ENCODE measurements at regions of chr1 and their contacts with region 1.

Region 1: GRCh38 chr1:87328272-87329050 is at the start of gene LMO4:
- DNase-seq: peak; percentile 93
- ATAC-seq: peak; percentile 78
- H3K4me3 ChIP-seq: peak within 1 kb of the TSS; percentile 75 to 79
- H3K27ac ChIP-seq: peak within 1 kb of the TSS; percentile 77
- H3K4me1 ChIP-seq: peaks cover 16 to 42% of the 10 kb centered on the region in 2 experiments
- H3K27me3 ChIP-seq: no peaks in the 10 kb centered on the region
- CTCF ChIP-seq: no peak
- POLR2A ChIP-seq: peak; percentile 68
- RAD21 ChIP-seq: no peak
- total RNA-seq, gene LMO4: 38.5 TPM

Region 2: DNA sequence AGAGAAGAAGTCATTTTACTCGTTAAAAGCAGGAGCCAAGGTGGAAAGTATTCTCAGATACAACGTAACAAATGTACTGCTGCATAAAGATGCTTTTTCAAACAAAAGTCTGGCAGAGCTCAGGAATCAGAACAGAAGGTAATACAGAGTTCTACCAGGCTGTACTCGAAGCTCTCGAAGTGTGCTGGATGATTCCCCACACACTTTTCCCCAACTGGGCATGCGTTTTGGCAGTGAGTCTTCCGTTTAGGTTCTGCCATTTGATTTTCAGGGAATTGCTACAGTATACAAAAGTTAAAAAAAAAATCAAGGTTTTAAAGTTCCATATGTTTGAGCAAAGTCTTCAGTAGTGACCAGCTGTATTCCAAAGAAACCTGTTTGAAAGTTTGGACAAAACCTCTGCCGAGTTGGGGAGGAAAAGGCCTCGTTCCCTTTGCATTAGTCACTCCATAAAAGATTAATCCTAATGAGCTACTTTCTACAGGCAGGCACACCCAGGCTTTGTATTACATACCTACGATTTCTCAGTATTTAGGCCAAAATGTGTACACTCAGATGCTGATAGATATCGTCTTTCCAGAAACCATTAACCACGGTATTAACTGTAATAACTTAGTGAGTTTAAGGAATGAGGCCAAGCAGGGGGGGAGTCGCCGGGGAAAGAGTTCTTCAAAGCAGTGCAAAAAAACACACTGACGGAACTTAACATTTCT is 477.4 kb after region 1 on chr1:
- CTCF ChIA-PET with region 1: no interaction called
- POLR2A ChIA-PET with region 1: no interaction called
- RAD21 ChIA-PET with region 1: no interaction called
- intact Hi-C with region 1: loop called (anchors 5 kb)
- DNase-seq: peak; percentile 28
- ATAC-seq: peak; percentile 82
- H3K4me3 ChIP-seq: peak overlapping the region in 1 of 2 experiments; percentile 52; a peak in 3 of 4 replicates
- H3K27ac ChIP-seq: peak overlapping the region; percentile 49
- H3K4me1 ChIP-seq: peaks cover 14 to 24% of the 10 kb centered on the region in 2 experiments
- H3K27me3 ChIP-seq: no peaks in the 10 kb centered on the region
- CTCF ChIP-seq: no peak
- POLR2A ChIP-seq: no peak
- RAD21 ChIP-seq: no peak; the same call in 1 of the 2 replicates

Region 3: DNA sequence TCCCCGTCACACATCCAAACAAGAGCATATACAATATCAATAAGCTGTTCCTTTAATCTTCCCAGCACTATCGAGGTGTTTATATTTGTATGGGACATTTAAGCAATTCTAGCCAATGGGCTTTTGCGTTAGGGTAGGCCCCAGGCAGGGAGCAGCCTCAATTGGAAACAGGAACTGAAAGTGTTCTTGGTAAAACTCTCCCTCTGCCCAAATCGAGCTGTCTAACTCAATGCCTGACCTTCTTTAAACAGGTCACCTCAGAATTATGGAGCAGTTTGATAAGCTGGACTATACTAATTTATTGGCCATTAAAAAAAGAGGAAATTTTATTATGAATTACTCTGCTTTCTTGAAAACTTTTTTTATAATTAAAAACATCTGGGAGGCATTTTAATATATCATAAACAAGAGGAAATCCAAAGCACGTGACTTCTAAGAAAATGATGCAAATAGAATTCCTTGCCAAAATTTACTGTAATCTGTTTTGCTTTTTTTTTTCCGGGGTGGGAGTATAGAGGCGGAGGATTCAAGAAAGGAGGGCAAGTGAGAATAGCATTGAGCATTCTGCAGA is 498.3 kb after region 1 on chr1:
- CTCF ChIA-PET with region 1: no interaction called
- POLR2A ChIA-PET with region 1: no interaction called
- RAD21 ChIA-PET with region 1: no interaction called
- intact Hi-C with region 1: no loop called
- DNase-seq: no peak
- ATAC-seq: no peak
- H3K4me3 ChIP-seq: no peak overlapping the region
- H3K27ac ChIP-seq: no peak overlapping the region
- H3K4me1 ChIP-seq: no peaks in the 10 kb centered on the region
- H3K27me3 ChIP-seq: no peaks in the 10 kb centered on the region
- CTCF ChIP-seq: no peak
- POLR2A ChIP-seq: no peak
- RAD21 ChIP-seq: no peak

Region 4: GRCh38 chr1:88061492-88062177 is 733.2 kb after region 1 on chr1:
- CTCF ChIA-PET with region 1: interaction called, 3 read pairs
- POLR2A ChIA-PET with region 1: no interaction called
- RAD21 ChIA-PET with region 1: interaction called in 1 of 2 experiments, 4 read pairs
- intact Hi-C with region 1: loop called (anchors 2 kb)
- DNase-seq: peak; percentile 61
- ATAC-seq: peak; percentile 96
- H3K4me3 ChIP-seq: no peak overlapping the region
- H3K27ac ChIP-seq: no peak overlapping the region
- H3K4me1 ChIP-seq: no peaks in the 10 kb centered on the region
- H3K27me3 ChIP-seq: no peaks in the 10 kb centered on the region
- CTCF ChIP-seq: peak; percentile 88 to 92 (median 89)
- POLR2A ChIP-seq: no peak
- RAD21 ChIP-seq: peak; percentile 74

Region 5: DNA sequence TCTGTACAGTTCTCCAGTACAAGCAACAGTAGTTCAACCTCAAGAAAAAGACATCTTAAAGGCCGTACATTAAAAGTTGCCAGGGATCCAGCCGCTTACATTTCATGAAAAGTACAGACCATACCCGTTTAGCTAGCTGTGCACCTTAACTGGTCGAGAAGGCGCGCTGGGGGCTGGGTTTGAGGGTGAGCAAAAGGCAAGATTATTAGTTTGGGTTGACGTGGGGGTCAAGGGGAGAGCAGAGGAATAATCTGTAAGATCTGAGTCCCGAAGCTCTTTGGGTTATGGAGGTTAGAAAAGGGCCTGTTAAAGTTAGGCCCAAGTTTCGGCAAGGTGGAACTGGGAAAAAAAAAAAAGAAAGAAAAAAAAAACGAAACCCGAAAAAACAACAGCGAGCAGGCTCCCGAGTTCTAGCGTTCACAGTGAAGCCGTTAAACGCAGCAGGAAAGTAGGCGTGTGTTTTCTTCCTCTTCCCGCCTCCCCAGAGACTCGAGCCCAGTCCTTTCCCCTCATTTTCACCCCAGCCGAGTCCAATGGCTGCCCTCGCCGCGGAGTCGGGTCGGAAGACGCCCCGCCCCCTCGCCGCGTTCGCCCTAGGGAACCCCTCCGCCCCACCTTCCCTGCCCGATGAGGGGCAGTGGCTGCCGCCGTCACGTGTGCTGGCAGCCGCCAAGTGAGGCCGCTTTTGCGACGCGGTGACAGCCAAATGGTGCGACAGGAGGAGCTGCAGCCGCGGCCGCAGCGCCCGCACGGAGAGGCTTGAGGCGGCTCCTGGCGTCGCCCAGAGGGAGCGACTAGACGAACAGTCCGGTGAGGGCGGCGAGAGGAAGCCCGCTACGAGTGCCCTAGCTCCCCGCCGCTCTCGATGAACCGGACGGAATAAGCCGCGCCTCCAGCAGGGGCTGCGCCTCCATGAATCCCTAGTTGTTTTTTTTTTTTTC is 1355.3 kb after region 1 on chr1 and contains the start of gene PKN2:
- CTCF ChIA-PET with region 1: no interaction called
- POLR2A ChIA-PET with region 1: no interaction called
- RAD21 ChIA-PET with region 1: no interaction called
- intact Hi-C with region 1: loop called (anchors 5 kb)
- DNase-seq: peak; percentile 97
- ATAC-seq: peak; percentile 93
- H3K4me3 ChIP-seq: peak within 1 kb of the TSS; percentile 70 to 82
- H3K27ac ChIP-seq: peak within 1 kb of the TSS; percentile 94
- H3K4me1 ChIP-seq: peaks cover 4 to 21% of the 10 kb centered on the region in 2 experiments; a peak in 3 of 4 replicates
- H3K27me3 ChIP-seq: no peaks in the 10 kb centered on the region
- CTCF ChIP-seq: no peak
- POLR2A ChIP-seq: peak; percentile 55
- RAD21 ChIP-seq: no peak
- total RNA-seq, gene PKN2: 44.3 TPM

Measured in HCT116 (cell line).